GM18951 (cell line): ENCODE measurements at regions of chr1 and their contacts with region 1.

Region 1: GRCh38 chr1:55277377-55278130 is 62.4 kb upstream of the USP24 start:
- POLR2A ChIP-seq: no peak

Region 2: DNA sequence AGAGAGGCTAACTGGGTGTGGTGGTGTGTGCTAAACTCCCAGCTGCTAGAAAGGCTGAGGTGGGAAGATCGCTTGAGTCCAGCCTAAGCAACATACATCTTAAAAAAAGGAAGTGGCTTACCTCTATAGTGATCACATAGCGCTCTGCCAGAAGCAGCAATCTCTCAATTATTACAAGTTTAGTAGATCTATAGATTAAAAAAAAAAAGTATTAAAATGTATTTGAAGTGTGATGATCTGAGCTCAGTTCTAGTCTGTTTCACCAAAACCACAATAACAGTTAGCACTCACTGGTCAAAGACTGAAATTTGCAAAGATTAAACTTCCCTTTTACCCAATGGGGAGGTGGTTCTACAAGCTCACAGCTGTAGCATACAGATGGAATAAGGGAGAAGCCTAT is 138.7 kb before region 1 on chr1:
- in situ Hi-C with region 1: loop called (anchors 5 kb)
- POLR2A ChIP-seq: no peak

Region 3: GRCh38 chr1:55382806-55383305 is 105.3 kb after region 1 on chr1:
- in situ Hi-C with region 1: no loop called
- POLR2A ChIP-seq: no peak

Region 4: GRCh38 chr1:56578963-56579875 is 1301.7 kb after region 1 on chr1 and contains the start of gene PLPP3:
- in situ Hi-C with region 1: loop called (anchors 25 kb)
- POLR2A ChIP-seq: peak; percentile 19

Region 5: DNA sequence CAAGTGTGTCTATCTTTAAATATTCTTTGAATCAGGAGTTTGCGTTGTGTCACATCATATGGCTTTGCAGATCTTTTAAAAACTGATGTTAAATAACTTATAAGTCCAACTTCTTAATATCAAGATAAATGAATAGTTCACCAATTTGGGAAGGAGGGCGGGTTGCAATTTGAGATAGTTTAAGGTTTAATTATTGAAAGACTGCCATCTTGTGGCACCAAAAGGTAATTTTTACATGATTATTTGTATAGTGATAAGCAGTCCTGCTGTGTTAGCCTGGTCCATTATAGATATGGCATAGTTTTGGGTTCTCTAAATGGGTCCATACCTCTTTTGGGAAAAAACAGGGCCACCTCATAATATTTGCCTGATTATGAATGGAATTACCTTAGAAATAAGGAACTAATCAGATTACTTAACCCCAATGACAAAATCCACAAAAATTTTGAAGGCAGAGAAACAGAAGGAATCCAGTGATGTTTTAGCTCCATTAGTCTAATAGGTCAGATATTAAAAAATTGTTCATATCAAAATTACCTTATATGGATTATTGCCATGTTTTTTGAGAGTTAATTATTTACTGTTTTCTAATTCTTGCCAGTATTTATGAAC is 1431.8 kb after region 1 on chr1:
- in situ Hi-C with region 1: loop called (anchors 25 kb)
- POLR2A ChIP-seq: no peak